ENCODE measurements at regions of chr2 and their contacts with region 1.

Region 1: DNA sequence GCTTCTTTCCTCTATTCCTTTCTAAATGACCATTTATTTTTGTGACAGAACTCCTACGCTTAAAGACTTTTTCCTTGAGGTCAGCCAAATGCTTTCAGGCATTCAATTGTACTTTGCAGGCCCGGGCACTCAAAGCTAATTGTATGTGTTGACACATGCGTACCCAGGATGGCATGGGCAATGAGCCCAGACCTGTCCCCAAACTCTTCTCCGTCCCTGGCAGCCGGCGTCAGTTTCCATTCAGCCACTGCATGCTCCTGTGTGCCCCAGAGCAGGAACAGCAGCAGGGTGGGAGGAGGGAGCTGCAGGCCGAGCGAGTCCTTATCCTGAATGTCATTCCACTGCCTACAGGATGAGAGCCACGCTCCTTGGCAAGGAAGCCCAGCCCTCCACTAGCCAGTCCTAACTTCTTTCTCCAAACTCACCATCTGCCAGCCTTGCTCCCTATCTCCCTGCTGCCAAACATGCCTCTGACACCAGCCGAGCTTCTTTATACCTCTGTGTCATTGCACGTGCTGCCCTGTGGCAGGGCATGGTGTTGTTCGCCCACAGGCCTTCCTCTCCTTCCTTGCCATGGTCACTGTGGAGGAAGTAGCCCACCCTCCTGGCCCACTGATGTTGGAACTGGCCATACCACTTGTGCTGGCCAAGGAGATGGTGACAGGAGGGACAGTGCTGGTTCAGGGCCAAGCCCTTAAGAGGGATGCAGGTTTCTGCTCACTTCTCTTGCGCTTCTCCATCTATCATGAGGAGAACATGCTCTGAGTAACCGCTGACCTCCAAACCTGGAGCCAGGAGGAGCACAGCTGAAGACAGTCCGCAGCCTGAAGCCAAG is 116.9 kb upstream of the FHL2 start:
- DNase-seq: peak; percentile 86 to 97 (median 89)
- ATAC-seq: peak; percentile 79 to 88 (median 84)
- H3K4me3 ChIP-seq: no peak overlapping the region
- H3K27ac ChIP-seq: peak overlapping the region; percentile 65 to 93 (median 80)
- H3K4me1 ChIP-seq: peaks cover 0 to 65% (median 25%) of the 10 kb centered on the region in 12 donors
- H3K27me3 ChIP-seq: no peaks in the 10 kb centered on the region
- CTCF ChIP-seq: no peak
- POLR2A ChIP-seq: no peak

Region 2: GRCh38 chr2:105496271-105496670 is 19.5 kb before region 1 on chr2:
- intact Hi-C with region 1: loop called in 4 of 10 experiments (anchors 1 to 2 kb)
- DNase-seq: peak; percentile 39 to 74 (median 64)
- ATAC-seq: peak; percentile 77 to 83 (median 80)
- H3K4me3 ChIP-seq: no peak overlapping the region
- H3K27ac ChIP-seq: peak overlapping the region; percentile 70 to 97 (median 86)
- H3K4me1 ChIP-seq: peaks cover 0 to 60% (median 27%) of the 10 kb centered on the region in 12 donors
- H3K27me3 ChIP-seq: no peaks in the 10 kb centered on the region
- CTCF ChIP-seq: no peak
- POLR2A ChIP-seq: no peak

Region 3: DNA sequence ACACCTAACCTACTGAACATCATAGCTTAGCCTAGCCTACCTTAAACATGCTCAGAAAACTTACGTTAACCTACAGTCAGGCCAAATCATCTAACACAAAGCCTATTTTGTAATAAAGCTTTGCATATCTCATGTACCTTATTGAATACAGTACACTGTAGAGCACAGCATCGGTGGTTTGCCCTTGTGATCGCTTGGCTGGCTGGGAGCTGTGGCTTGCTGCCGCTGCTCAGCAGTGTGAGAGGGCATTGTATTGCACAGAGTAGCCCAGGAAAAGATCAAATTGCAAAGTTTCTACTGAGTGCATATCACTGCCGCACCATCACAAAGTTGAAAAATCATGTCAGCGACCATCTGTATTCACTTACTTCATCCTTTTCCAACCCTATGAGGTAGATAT is 166.6 kb after region 1 on chr2:
- intact Hi-C with region 1: no loop called
- DNase-seq: no peak
- ATAC-seq: no peak
- H3K4me3 ChIP-seq: no peak overlapping the region
- H3K27ac ChIP-seq: no peak overlapping the region
- H3K4me1 ChIP-seq: no peaks in the 10 kb centered on the region
- H3K27me3 ChIP-seq: no peaks in the 10 kb centered on the region
- CTCF ChIP-seq: no peak
- POLR2A ChIP-seq: no peak